Activated CD8-positive, alpha-beta T cell treated with anti-CD3 and anti-CD28 coated beads, Interleukin-2, amount 10 ng/mL, durations not matched to agents 7 days and 5 days (primary cell): ENCODE measurements at regions of chr7 and their contacts with region 1.

Region 1: GRCh38 chr7:95527033-95527775 is 41.5 kb downstream of the ASB4 start:
- DNase-seq: peak; percentile 31
- ATAC-seq: no peak
- H3K4me3 Mint-ChIP-seq: no peak overlapping the region
- H3K27ac Mint-ChIP-seq: no peak overlapping the region
- H3K4me1 Mint-ChIP-seq: no peaks in the 10 kb centered on the region
- H3K27me3 Mint-ChIP-seq: peaks cover 10% of the 10 kb centered on the region

Region 2: GRCh38 chr7:95690367-95690947 is 163.3 kb after region 1 on chr7:
- CTCF ChIA-PET with region 1: interaction called, 27 read pairs
- POLR2A ChIA-PET with region 1: no interaction called
- DNase-seq: peak; percentile 33
- ATAC-seq: peak; percentile 44
- H3K4me3 Mint-ChIP-seq: no peak overlapping the region
- H3K27ac Mint-ChIP-seq: no peak overlapping the region
- H3K4me1 Mint-ChIP-seq: peaks cover 2% of the 10 kb centered on the region
- H3K27me3 Mint-ChIP-seq: no peaks in the 10 kb centered on the region